Cardiac septum (tissue), 1 donor: ENCODE measurements at regions of chr17 and their contacts with region 1.

Region 1: GRCh38 chr17:28612936-28613872 is 781 bp downstream of the RSKR start:
- DNase-seq: no peak

Region 2: GRCh38 chr17:28494445-28495188 is 118.6 kb before region 1 on chr17:
- intact Hi-C with region 1: loop called (anchors 2 kb)
- DNase-seq: peak; percentile 88

Region 3: DNA sequence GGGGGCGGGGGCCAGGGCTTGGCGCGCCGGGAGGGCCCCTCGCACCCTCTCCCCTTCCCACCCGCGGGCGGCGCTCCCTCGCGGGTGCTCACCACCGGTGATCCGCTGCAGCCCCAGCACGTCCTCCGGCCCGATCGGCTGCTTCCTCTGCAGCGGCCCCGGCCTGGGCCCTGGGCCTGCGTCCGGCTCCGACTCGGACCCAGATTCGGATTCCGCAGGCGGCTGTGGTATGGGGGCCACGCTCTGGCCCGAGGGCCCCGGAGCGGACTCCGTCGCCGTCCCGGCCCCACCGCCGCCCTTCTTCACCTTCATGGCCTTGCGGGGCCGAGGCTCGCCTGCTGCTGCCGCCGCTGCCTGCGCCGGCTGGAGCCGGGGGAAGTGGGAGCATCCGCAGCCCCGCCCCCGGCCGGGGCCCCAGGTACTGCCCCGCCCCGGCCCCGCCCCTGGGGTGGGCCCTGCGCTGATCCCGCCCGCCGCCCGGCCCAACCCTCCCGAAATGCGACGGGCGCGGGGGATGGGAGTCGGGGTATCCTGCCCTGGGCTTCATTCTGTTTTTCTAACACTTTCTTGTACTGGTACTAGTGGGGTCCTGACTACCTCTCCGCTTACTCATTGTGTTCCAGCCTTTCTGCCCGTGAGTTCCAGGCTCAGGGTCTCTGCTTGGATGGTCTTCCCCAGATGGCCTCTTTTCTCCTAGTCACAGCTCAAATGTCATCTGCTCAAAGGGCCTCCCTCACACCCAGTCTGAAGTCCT is 60.8 kb before region 1 on chr17 and contains the start of gene UNC119:
- intact Hi-C with region 1: loop called (anchors 2 kb)
- DNase-seq: peak; percentile 93
- total RNA-seq, gene UNC119: 16.0 TPM